ENCODE measurements at regions of chr2 and their contacts with region 1.

Region 1: DNA sequence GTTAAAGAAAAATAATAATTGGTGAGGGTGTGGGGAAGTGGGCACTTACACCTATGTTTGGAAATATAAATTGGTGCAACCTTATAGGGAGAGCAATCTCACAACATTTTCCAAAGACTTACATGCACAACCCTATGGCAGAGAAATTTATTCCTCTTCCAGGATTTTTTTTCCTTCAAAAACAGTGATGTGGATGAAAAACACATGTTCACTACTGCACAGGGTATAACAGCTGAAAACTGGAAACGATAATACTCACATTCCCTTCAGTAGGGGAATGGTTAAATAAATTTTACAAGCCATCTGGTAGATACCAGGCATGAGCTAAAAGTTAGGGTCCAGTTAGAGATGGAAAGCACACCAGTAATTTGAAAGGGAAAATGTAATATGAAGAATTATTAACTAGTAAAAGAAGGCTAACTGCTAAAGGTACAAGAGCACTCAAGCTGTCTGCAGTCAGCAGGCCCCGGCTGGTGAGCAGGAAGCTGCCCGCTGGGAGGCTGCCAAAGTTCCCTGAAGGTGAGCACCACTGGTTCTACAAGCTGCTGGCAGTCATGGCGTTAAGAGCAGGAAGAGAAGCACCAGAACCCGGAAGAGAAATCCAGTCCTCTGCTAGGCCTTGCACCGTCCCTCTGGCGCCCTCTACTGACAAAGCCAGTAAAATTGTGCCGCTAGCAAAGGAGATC is 28.4 kb upstream of the CASP8 start:
- DNase-seq: peak; percentile 69
- ATAC-seq: peak; percentile 62
- H3K4me3 Mint-ChIP-seq: peak overlapping the region; percentile 55
- H3K27ac Mint-ChIP-seq: peak overlapping the region; percentile 93
- H3K4me1 Mint-ChIP-seq: peaks cover 56% of the 10 kb centered on the region
- H3K27me3 Mint-ChIP-seq: no peaks in the 10 kb centered on the region
- CTCF ChIP-seq: peak; percentile 32

Region 2: DNA sequence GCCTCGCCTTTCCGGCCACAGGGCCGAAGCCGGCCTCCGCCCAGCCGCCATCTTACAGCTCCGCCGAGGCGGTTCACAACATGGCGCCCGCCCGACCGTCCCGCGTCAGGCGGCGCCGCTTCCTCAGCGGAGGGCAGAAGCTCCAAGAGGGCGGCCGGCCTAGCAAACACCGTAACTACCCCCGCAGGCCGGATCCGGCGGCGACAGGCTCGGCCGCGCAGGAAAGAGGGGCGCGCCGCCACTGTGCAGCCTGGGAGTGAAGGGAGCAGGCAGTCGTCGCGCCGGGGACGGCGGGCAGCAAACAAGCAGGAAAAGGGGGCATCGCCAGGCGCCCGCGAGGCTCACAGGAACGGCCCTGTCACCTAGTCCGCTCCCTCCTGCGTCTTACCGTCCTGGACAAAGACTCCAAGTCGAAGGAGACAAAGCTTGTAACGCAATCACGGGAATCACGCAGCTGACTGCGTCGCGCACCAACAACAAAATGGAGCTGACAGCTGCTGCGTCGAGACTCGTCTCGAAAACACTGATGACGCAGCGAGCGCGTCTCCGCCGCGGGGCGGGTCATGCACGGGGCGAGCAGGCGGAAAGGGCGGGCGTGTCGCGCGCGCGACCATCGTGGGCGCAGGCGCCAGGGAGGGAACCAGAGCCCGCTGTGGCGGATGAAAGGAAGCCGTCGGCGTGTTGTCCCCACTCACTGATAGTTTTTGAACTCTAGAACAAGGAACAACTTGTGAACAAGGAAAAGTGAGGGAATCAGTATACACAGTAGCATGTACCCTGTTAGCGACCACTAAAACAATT is 367.5 kb before region 1 on chr2 and contains the start of gene CLK1:
- CTCF ChIA-PET with region 1: interaction called, 3 read pairs
- POLR2A ChIA-PET with region 1: interaction called, 10 read pairs
- intact Hi-C with region 1: no loop called
- DNase-seq: peak; percentile 90
- ATAC-seq: peak; percentile 82
- H3K4me3 Mint-ChIP-seq: peak within 1 kb of the TSS; percentile 100
- H3K27ac Mint-ChIP-seq: peak within 1 kb of the TSS; percentile 100
- H3K4me1 Mint-ChIP-seq: peaks cover 41% of the 10 kb centered on the region
- H3K27me3 Mint-ChIP-seq: no peaks in the 10 kb centered on the region
- CTCF ChIP-seq: no peak
- total RNA-seq, gene CLK1: 173 and 203 TPM in 2 replicates

Region 3: DNA sequence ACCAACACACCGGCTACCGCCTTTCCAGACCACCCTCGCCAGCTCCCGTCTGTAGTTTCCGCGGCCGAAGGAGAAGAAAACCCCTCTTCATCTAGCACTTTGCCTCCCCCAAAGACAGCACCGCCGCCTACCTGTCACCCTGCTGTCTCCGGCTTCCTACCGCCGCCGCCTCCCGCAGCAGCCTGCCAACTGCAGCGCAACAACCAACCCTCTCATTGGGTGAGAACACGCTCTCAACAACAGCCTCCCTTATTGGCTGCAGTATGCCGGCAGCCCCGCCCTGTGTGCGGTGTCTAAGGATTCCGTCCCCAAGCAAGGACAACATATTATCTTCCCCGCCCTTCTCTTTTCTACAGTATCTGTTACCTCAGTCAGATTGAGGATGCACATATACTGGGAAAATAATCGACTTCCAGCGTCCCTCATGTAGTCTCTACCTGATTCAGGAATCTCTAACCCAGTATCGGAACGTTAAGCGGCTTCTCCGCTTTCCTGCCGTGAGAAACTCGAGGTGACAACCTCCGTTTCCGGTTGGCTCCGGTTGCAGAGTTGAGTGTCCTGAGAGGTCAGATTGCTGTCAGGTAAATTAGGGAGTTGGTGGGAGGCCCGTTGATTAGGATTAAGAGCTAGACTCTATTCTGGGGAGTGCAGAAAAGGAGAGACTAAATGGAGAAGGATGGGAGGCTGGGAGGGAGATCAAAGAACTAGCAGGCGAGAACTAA is 160.3 kb before region 1 on chr2 and contains the starts of genes HYCC2 and NDUFB3:
- CTCF ChIA-PET with region 1: interaction called, 20 read pairs
- POLR2A ChIA-PET with region 1: no interaction called
- intact Hi-C with region 1: loop called (anchors 1 kb)
- DNase-seq: peak; percentile 77
- ATAC-seq: peak; percentile 96
- H3K4me3 Mint-ChIP-seq: peak within 1 kb of the TSS; percentile 98
- H3K27ac Mint-ChIP-seq: peak within 1 kb of the TSS; percentile 96
- H3K4me1 Mint-ChIP-seq: peaks cover 50% of the 10 kb centered on the region
- H3K27me3 Mint-ChIP-seq: no peaks in the 10 kb centered on the region
- CTCF ChIP-seq: no peak
- total RNA-seq, gene HYCC2: 32.0 and 39.6 TPM in 2 replicates
- total RNA-seq, gene NDUFB3: 85.4 and 94.2 TPM in 2 replicates

Region 4: DNA sequence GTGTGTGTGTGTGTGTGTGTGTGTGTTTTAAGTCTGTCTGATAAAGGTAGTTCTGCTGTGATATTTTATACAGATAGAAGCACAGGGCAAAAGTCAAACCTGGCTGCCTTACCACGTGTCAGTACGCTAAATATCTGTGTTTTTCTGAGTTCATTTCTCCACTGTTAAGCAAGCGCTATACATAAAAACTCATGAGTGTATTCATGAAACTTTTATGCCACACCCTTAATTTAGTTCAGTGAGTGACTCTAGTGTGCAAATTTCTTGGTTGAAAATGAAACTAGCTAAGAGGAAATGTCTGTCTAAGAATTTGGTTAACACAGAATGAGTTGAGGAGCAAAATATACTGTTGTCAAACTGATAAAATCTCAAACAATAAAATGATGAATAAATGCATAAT is 37.8 kb before region 1 on chr2:
- CTCF ChIA-PET with region 1: interaction called, 12 read pairs
- POLR2A ChIA-PET with region 1: interaction called, 6 read pairs
- intact Hi-C with region 1: loop called (anchors 1 kb)
- DNase-seq: no peak
- ATAC-seq: peak; percentile 92
- H3K4me3 Mint-ChIP-seq: peak overlapping the region; percentile 60
- H3K27ac Mint-ChIP-seq: peak overlapping the region; percentile 75
- H3K4me1 Mint-ChIP-seq: peaks cover 70% of the 10 kb centered on the region
- H3K27me3 Mint-ChIP-seq: no peaks in the 10 kb centered on the region
- CTCF ChIP-seq: no peak

Region 5: DNA sequence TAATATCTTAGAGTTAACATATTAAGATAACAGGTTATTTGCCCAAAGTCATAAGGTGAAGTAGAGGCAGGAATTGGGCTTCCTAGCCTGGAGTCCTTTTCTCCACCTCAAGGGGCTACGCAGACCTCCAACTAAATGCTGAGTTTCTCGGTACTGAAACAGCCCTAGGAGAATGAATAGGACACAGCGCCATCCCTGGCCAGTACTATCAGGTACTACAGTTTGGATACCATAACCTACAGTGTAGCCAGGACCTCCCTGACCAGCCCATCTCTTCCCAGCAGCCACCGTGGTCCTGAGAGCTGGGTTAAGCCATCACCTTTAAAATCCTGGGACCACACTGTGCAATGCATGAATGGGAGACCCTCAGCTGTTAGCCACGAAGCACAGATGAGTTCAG is 44.1 kb after region 1 on chr2:
- CTCF ChIA-PET with region 1: interaction called, 6 read pairs
- POLR2A ChIA-PET with region 1: interaction called, 7 read pairs
- intact Hi-C with region 1: loop called (anchors 1 kb)
- DNase-seq: no peak
- ATAC-seq: no peak
- H3K4me3 Mint-ChIP-seq: no peak overlapping the region
- H3K27ac Mint-ChIP-seq: no peak overlapping the region
- H3K4me1 Mint-ChIP-seq: peaks cover 25% of the 10 kb centered on the region
- H3K27me3 Mint-ChIP-seq: no peaks in the 10 kb centered on the region
- CTCF ChIP-seq: no peak

Region 6: DNA sequence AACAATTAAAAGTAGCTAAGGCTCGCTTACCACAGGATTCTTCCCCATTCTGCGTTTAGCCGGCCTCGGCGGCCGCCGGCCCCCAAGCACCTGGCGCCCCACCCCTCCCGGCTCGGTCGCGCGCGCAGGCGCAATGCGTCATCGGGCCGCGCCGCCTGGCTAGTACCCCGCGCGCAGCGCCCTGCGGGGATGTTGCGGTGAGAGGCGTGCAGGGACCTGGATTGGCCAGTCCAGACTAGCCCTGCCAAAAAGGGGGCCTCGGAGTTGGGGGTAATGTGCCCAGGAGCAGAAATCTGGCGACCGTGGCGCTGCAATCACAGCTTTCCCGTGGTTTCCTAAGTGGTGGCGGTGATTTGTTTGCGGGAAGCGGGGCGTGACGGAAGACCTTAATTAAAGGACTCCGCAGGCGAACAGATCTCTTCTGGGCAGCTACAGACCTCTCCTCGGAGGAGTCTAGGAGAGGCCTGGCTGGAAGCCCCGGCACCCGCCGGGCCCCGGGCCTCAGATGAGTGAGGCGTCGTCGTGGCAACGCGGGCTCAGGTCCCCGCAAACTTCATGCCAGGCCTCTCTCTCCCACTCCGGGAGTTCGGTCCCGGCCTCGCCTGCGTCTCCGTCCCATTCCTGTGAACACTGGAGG is 410.8 kb after region 1 on chr2:
- CTCF ChIA-PET with region 1: no interaction called
- POLR2A ChIA-PET with region 1: interaction called, 4 read pairs
- intact Hi-C with region 1: loop called (anchors 2 kb)
- DNase-seq: peak; percentile 91
- ATAC-seq: peak; percentile 86
- H3K4me3 Mint-ChIP-seq: peak overlapping the region; percentile 95
- H3K27ac Mint-ChIP-seq: peak overlapping the region; percentile 91
- H3K4me1 Mint-ChIP-seq: peaks cover 9% of the 10 kb centered on the region
- H3K27me3 Mint-ChIP-seq: no peaks in the 10 kb centered on the region
- CTCF ChIP-seq: no peak

Region 7: DNA sequence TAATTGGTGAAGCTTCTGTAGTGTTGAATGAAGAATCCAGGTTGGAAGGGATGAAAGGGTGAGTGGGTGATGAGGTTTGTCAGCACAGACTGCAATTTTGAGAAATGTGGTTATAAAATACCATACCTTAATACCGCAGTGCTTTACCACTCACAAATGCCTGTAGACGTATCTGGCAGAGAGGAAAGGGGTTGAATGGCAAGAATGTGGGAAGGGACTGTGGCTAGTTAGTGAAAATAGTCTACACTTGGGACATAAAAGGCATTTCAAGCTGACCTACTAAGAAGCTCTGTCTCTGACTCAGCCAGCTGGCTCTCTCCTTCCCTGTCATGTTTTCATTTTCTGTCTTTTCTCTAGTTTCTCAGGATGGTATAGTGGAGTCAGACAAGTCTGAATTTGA is 599.5 kb after region 1 on chr2:
- CTCF ChIA-PET with region 1: no interaction called
- POLR2A ChIA-PET with region 1: no interaction called
- intact Hi-C with region 1: no loop called
- DNase-seq: no peak
- ATAC-seq: no peak
- H3K4me3 Mint-ChIP-seq: no peak overlapping the region
- H3K27ac Mint-ChIP-seq: no peak overlapping the region
- H3K4me1 Mint-ChIP-seq: no peaks in the 10 kb centered on the region
- H3K27me3 Mint-ChIP-seq: peaks cover 6% of the 10 kb centered on the region
- CTCF ChIP-seq: no peak

Region 8: GRCh38 chr2:202178342-202178958 is 946.5 kb after region 1 on chr2:
- CTCF ChIA-PET with region 1: interaction called, 5 read pairs
- POLR2A ChIA-PET with region 1: no interaction called
- intact Hi-C with region 1: loop called (anchors 1 kb)
- DNase-seq: no peak
- ATAC-seq: peak; percentile 66
- H3K4me3 Mint-ChIP-seq: no peak overlapping the region
- H3K27ac Mint-ChIP-seq: no peak overlapping the region
- H3K4me1 Mint-ChIP-seq: no peaks in the 10 kb centered on the region
- H3K27me3 Mint-ChIP-seq: peaks cover 8% of the 10 kb centered on the region
- CTCF ChIP-seq: peak; percentile 57

Region 9: DNA sequence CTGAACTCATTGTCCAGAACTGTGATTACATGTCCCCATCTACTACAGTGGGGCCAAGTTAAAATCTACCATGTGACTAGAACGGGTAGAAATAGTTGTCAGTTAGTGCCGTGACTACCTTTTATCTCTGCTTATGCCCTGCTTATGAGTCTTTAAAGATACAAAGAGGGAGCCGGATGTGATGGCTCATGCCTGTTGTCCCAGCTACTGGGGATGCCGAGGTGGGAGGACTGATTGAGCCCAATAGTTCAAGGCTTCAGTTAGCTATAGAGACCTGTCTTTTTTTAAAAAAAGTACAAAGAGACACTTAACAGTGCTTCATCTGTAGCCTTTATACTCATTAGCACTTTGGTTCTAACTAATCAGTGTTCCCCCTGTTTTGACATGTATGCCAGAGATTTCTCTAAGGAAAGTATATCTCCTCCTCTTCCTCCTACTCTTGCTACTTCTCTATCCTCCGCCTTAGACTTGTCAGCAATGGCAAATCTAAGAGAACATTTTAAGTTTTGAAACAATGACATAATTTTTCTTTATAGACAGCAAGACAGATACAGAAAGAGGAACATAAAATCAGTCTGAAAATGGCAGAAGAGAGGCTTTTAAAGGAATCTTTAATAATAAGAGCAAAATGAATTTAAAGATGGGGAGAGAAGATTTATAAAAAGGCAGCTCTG is 1827.8 kb after region 1 on chr2:
- CTCF ChIA-PET with region 1: no interaction called
- POLR2A ChIA-PET with region 1: no interaction called
- intact Hi-C with region 1: no loop called
- DNase-seq: no peak
- ATAC-seq: no peak
- H3K4me3 Mint-ChIP-seq: no peak overlapping the region
- H3K27ac Mint-ChIP-seq: no peak overlapping the region
- H3K4me1 Mint-ChIP-seq: no peaks in the 10 kb centered on the region
- H3K27me3 Mint-ChIP-seq: no peaks in the 10 kb centered on the region
- CTCF ChIP-seq: no peak